GM12878 (cell line): ENCODE measurements at regions of chr4 and their contacts with region 1.

Region 1: DNA sequence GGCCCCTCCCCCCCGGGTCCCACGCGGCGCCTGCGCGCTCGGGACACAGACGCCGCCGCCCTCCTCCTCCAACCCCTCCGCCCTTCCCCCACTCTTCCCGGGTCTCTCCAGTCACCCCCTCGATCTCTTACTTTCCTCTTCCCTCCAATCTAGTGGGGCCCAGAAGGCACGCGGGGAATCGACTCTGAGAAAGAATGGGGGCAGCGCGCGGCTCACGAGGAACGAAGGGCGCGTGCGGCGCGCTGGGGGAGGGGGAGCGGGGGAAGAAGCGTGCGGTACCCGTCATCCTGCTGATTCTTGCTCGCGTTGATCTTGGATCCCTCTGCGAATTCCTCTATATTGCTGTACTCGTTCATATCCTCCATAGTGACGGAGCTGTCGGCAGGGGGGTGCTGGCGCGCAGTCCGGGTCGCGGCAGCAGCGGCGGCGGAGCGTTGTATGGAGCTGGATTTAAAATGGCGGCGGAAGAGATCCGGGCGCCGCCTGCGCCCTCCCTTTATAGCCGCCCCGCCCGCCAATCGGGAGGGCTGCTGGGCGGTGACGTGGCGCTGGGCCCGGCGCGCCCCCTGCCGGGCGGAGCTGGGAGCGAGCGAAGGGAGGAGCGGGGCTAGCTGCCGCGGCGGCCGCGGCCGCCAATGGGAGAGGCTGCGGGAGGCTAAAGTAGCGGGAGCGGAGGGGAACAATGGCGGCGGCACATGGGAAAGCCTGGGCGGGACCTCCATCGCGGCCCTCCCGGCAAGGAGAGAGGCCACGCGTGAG is 1.1 kb downstream of the HNRNPDL start:
- DNase-seq: peak; percentile 52
- ATAC-seq: peak; percentile 72
- H3K4me3 ChIP-seq: peak overlapping the region; percentile 97
- H3K27ac ChIP-seq: peak overlapping the region; percentile 98
- H3K4me1 ChIP-seq: peaks cover 3% of the 10 kb centered on the region; the same call in 1 of the 2 replicates
- H3K27me3 ChIP-seq: no peaks in the 10 kb centered on the region
- CTCF ChIP-seq: peak; percentile 75 to 97 (median 96); a peak in 4 of 6 replicates
- EP300 ChIP-seq: peak in 1 of 2 experiments; percentile 46; a peak in 1 of 4 replicates
- POLR2A ChIP-seq: peak; percentile 94
- RAD21 ChIP-seq: 0 out of 2 replicates have a peak, but pooled peaks have one; percentile 8

Region 2: GRCh38 chr4:82140440-82140839 is 288.7 kb before region 1 on chr4:
- CTCF ChIA-PET with region 1: no interaction called
- POLR2A ChIA-PET with region 1: no interaction called
- RAD21 ChIA-PET with region 1: no interaction called
- SMC1A ChIA-PET with region 1: no interaction called
- in situ Hi-C with region 1: no loop called
- intact Hi-C with region 1: no loop called
- DNase-seq: no peak
- ATAC-seq: no peak
- H3K4me3 ChIP-seq: no peak overlapping the region
- H3K27ac ChIP-seq: no peak overlapping the region
- H3K4me1 ChIP-seq: no peaks in the 10 kb centered on the region
- H3K27me3 ChIP-seq: no peaks in the 10 kb centered on the region
- CTCF ChIP-seq: no peak
- EP300 ChIP-seq: no peak
- POLR2A ChIP-seq: no peak
- RAD21 ChIP-seq: no peak

Region 3: GRCh38 chr4:82284858-82285805 is 144.0 kb before region 1 on chr4:
- CTCF ChIA-PET with region 1: interaction called, 6 read pairs
- POLR2A ChIA-PET with region 1: no interaction called
- RAD21 ChIA-PET with region 1: interaction called, 4 read pairs
- SMC1A ChIA-PET with region 1: no interaction called
- in situ Hi-C with region 1: no loop called
- intact Hi-C with region 1: loop called (anchors 10 kb)
- DNase-seq: peak; percentile 79
- ATAC-seq: peak; percentile 100
- H3K4me3 ChIP-seq: peak overlapping the region; percentile 63
- H3K27ac ChIP-seq: no peak overlapping the region
- H3K4me1 ChIP-seq: no peaks in the 10 kb centered on the region; the same call in 1 of the 2 replicates
- H3K27me3 ChIP-seq: peaks cover 0 to 10% of the 10 kb centered on the region in 2 experiments; a peak in 1 of 4 replicates
- CTCF ChIP-seq: peak; percentile 70 to 90 (median 74)
- EP300 ChIP-seq: no peak
- POLR2A ChIP-seq: no peak
- RAD21 ChIP-seq: peak; percentile 31; the same call in 1 of the 2 replicates

Region 4: GRCh38 chr4:82360298-82361177 is 68.6 kb before region 1 on chr4:
- CTCF ChIA-PET with region 1: interaction called, 19 read pairs
- POLR2A ChIA-PET with region 1: interaction called, 18 read pairs
- RAD21 ChIA-PET with region 1: interaction called, 10 read pairs
- SMC1A ChIA-PET with region 1: interaction called, 4 read pairs
- in situ Hi-C with region 1: no loop called
- intact Hi-C with region 1: no loop called
- DNase-seq: no peak
- ATAC-seq: peak; percentile 52
- H3K4me3 ChIP-seq: no peak overlapping the region
- H3K27ac ChIP-seq: no peak overlapping the region
- H3K4me1 ChIP-seq: peaks cover 5% of the 10 kb centered on the region; the same call in 1 of the 2 replicates
- H3K27me3 ChIP-seq: no peaks in the 10 kb centered on the region
- CTCF ChIP-seq: peak; percentile 54 to 67 (median 58)
- EP300 ChIP-seq: no peak
- POLR2A ChIP-seq: no peak
- RAD21 ChIP-seq: peak; percentile 42

Region 5: GRCh38 chr4:82373816-82374625 is 55.1 kb before region 1 on chr4 and contains the start of gene HNRNPD:
- CTCF ChIA-PET with region 1: interaction called, 12 read pairs
- POLR2A ChIA-PET with region 1: interaction called, 8 read pairs
- RAD21 ChIA-PET with region 1: interaction called, 5 read pairs
- SMC1A ChIA-PET with region 1: interaction called, 12 read pairs
- in situ Hi-C with region 1: loop called (anchors 10 kb)
- intact Hi-C with region 1: loop called (anchors 1 kb)
- DNase-seq: peak; percentile 97
- ATAC-seq: peak; percentile 92
- H3K4me3 ChIP-seq: peak within 1 kb of the TSS; percentile 90
- H3K27ac ChIP-seq: peak within 1 kb of the TSS; percentile 98
- H3K4me1 ChIP-seq: peaks cover 6% of the 10 kb centered on the region
- H3K27me3 ChIP-seq: no peaks in the 10 kb centered on the region
- CTCF ChIP-seq: no peak
- EP300 ChIP-seq: peak in 1 of 2 experiments; percentile 28; a peak in 1 of 4 replicates
- POLR2A ChIP-seq: peak; percentile 99
- RAD21 ChIP-seq: 0 out of 2 replicates have a peak, but pooled peaks have one; percentile 1
- polyA plus RNA-seq, gene HNRNPD: 183 to 313 TPM

Region 6: DNA sequence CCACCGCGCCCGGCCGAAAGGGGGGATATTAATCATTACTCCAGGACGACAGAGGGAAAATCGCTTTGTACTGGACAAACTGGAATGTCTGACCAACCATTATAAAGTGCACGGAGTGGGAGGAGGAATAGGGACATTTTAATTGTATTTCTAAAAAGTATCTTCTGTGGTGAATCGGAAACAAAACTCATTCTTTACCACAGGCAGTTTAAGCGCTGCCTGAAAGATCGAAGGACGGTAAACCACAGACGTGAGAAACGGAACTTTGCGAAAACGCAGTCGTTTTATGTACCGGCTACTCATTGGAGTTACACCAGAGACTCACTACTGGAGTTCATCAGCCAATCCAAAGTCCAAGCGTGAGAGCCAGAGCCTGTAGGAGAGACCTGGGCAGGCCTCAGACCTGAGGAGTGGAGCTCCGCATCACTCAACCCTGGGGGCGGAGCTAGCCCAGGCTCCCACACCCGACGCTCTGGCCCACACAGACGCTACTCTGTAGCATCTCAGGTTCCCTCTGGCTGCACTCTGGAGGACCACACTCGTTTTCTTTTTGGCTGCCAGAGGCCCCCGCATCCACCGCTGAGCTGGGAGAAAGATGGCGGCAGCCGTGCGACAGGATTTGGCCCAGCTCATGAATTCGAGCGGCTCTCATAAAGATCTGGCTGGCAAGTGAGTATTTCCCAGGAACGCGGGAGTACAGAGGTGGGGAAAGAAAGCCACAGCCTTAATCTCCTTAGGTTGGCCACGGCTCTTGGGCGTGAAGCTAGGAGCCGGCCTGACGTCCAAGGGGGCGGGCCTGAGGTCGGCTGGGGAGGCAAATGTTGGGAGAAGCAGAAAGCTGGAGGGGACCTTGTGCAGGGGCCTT is 605.7 kb after region 1 on chr4 and contains the start of gene COPS4:
- CTCF ChIA-PET with region 1: no interaction called
- POLR2A ChIA-PET with region 1: no interaction called
- RAD21 ChIA-PET with region 1: interaction called, 3 read pairs
- SMC1A ChIA-PET with region 1: no interaction called
- in situ Hi-C with region 1: no loop called
- intact Hi-C with region 1: loop called (anchors 2 kb)
- DNase-seq: peak; percentile 100
- ATAC-seq: peak; percentile 96
- H3K4me3 ChIP-seq: peak within 1 kb of the TSS; percentile 78
- H3K27ac ChIP-seq: peak within 1 kb of the TSS; percentile 77
- H3K4me1 ChIP-seq: peaks cover 6% of the 10 kb centered on the region
- H3K27me3 ChIP-seq: no peaks in the 10 kb centered on the region
- CTCF ChIP-seq: peak in 1 of 3 experiments; percentile 17; a peak in 1 of 6 replicates
- EP300 ChIP-seq: peak; percentile 42 to 66; a peak in 3 of 4 replicates
- POLR2A ChIP-seq: peak; percentile 74
- RAD21 ChIP-seq: 0 out of 2 replicates have a peak, but pooled peaks have one; percentile 15
- polyA plus RNA-seq, gene COPS4: 112 to 159 TPM